Calu3 (cell line): ENCODE measurements at regions of chr6 and their contacts with region 1.

Region 1: DNA sequence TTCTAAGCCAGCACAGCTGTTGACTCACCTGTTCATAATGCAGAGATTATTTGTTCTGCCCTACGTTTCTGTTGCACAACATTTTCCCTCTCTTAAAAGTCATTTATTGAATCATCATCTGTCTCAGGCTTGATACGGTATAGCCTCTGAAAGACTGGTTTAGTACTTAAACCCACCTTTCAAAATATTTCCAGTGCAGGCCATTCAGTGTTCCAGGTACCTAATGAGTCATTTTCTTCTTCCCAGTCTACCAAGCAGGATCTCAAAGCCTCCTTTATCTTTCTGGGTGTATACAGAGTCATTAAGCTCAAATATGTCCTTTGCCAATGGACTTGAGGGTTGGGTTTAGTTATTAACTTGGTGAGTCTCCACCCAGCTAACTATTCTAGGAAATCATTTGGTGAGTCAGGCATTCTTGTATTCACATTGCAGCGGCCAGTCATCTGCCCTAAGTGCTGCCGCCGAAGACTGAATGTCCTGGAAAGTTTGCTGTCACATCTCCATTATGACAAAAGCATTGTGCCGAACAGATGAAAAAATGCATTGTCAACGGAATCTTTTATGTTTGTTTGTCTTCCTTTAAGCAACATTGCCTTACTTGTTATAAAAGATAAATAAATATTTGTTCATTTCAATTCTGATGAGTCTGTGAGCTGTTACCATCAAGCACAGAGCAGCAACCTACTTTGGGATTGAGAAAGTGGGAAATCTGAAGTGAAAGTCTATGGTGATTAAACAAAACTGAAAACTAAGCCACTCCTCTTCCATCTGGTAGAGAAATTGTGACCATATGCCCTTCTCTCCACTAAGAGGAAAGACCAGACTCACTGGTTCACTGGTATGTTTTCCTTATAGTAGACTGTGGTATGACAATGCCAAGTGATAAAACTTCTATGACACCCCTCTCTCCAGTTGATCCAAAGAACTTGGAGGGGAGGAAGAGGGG is 14.3 kb upstream of the FAM135A start:
- DNase-seq: peak; percentile 79
- H3K4me3 Mint-ChIP-seq: peak overlapping the region; percentile 63
- H3K27ac Mint-ChIP-seq: peak overlapping the region; percentile 90
- H3K4me1 Mint-ChIP-seq: peaks cover 86% of the 10 kb centered on the region
- H3K27me3 Mint-ChIP-seq: no peaks in the 10 kb centered on the region
- CTCF ChIP-seq: no peak

Region 2: GRCh38 chr6:69756366-69756765 is 642.7 kb before region 1 on chr6:
- CTCF ChIA-PET with region 1: no interaction called
- intact Hi-C with region 1: no loop called
- DNase-seq: no peak
- H3K4me3 Mint-ChIP-seq: no peak overlapping the region
- H3K27ac Mint-ChIP-seq: no peak overlapping the region
- H3K4me1 Mint-ChIP-seq: no peaks in the 10 kb centered on the region
- H3K27me3 Mint-ChIP-seq: no peaks in the 10 kb centered on the region
- CTCF ChIP-seq: no peak

Region 3: GRCh38 chr6:70380271-70380670 is 18.8 kb before region 1 on chr6:
- CTCF ChIA-PET with region 1: interaction called, 11 read pairs
- intact Hi-C with region 1: loop called (anchors 2 kb)
- DNase-seq: no peak
- H3K4me3 Mint-ChIP-seq: peak overlapping the region; percentile 54
- H3K27ac Mint-ChIP-seq: peak overlapping the region; percentile 43
- H3K4me1 Mint-ChIP-seq: peaks cover 39% of the 10 kb centered on the region
- H3K27me3 Mint-ChIP-seq: no peaks in the 10 kb centered on the region
- CTCF ChIP-seq: no peak

Region 4: DNA sequence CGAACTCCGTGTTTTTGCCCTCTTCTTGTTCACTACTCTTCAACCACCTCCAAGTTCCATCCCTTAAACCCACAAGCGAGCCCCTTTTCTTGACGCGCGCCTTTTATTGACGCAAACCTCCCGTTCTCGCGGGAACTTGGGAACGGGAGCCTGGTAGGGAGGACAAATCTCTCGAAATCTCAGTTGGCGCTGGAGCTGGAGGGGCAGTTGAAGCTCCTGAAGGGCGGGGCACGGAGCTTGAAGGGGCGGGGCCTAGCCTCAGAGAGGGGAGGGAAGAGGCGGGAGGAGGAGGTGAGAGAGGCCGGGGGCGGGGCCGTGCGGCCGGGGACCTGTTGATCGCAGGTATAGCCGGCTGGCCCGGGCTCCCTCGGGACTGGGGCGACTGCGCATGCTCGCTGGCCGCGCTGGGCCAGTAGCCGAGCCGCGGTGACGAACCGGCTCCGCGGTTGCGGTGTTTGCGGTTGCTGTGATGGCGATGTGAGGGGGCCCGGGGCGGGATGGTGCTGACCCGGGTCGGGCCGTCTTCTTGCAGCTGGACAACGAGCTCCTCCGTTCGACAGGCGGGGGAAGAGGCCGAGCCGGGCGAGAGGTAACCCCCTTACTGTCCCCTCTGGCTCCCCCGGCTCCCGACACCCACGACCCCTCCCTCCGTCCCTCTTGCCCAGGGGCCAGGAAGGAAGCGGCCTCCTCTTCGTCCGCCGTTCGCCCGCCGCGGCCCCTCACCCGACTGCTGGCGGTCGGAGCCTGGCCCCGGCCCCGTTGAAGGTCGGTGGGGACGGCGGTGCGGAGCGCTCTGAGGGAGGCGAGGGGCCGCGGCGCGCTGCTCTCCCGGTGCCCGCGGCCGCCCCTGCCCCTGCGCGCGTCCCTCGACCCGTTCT is 14.3 kb after region 1 on chr6 and contains the start of gene FAM135A:
- CTCF ChIA-PET with region 1: interaction called, 32 read pairs
- intact Hi-C with region 1: loop called (anchors 1 kb)
- DNase-seq: peak; percentile 100
- H3K4me3 Mint-ChIP-seq: peak within 1 kb of the TSS; percentile 90
- H3K27ac Mint-ChIP-seq: peak within 1 kb of the TSS; percentile 91
- H3K4me1 Mint-ChIP-seq: peaks cover 22% of the 10 kb centered on the region
- H3K27me3 Mint-ChIP-seq: no peaks in the 10 kb centered on the region
- CTCF ChIP-seq: no peak
- total RNA-seq, gene FAM135A: 83.2 and 89.2 TPM in 2 replicates

Region 5: GRCh38 chr6:70421509-70421908 is 22.5 kb after region 1 on chr6:
- CTCF ChIA-PET with region 1: interaction called, 8 read pairs
- intact Hi-C with region 1: loop called (anchors 1 kb)
- DNase-seq: no peak
- H3K4me3 Mint-ChIP-seq: no peak overlapping the region
- H3K27ac Mint-ChIP-seq: no peak overlapping the region
- H3K4me1 Mint-ChIP-seq: peaks cover 55% of the 10 kb centered on the region
- H3K27me3 Mint-ChIP-seq: no peaks in the 10 kb centered on the region
- CTCF ChIP-seq: no peak